Gastrocnemius medialis (tissue), 4 donors: ENCODE measurements at regions of chr1 and their contacts with region 1.

Region 1: GRCh38 chr1:37317870-37318467 is 156.4 kb upstream of the ZC3H12A start:
- DNase-seq: no peak
- ATAC-seq: no peak
- H3K4me3 ChIP-seq: no peak overlapping the region
- H3K27ac ChIP-seq: no peak overlapping the region
- H3K4me1 ChIP-seq: no peaks in the 10 kb centered on the region
- H3K27me3 ChIP-seq: peaks cover 36 to 51% (median 42%) of the 10 kb centered on the region in 3 donors
- CTCF ChIP-seq: no peak
- POLR2A ChIP-seq: no peak

Region 2: DNA sequence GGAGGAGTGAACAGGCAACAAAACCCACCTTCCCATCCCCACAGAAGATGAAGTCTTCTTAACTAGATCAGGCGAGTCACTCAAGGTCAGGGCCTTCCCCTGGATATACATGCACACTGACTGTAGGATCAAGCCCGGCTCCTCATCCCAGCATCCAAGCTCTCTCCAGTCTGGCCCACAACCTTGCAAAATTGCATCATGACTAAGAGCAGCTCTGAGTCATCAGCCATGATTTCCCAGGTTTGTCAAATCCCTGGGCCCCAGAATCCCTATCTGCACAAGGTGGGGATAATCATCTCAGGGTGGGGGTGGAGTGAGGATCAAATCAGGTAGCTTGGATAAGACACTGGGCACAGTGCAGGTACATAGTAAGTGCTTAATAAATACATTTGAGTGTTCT is 84.4 kb before region 1 on chr1:
- in situ Hi-C with region 1: no loop called
- intact Hi-C with region 1: no loop called
- DNase-seq: no peak
- ATAC-seq: no peak
- H3K4me3 ChIP-seq: no peak overlapping the region
- H3K27ac ChIP-seq: no peak overlapping the region
- H3K4me1 ChIP-seq: no peaks in the 10 kb centered on the region
- H3K27me3 ChIP-seq: peaks cover 0 to 6% (median 2%) of the 10 kb centered on the region in 3 donors
- CTCF ChIP-seq: no peak
- POLR2A ChIP-seq: no peak

Region 3: GRCh38 chr1:37338658-37339057 is 20.7 kb after region 1 on chr1:
- in situ Hi-C with region 1: no loop called
- intact Hi-C with region 1: loop called (anchors 2 kb)
- DNase-seq: no peak
- ATAC-seq: no peak
- H3K4me3 ChIP-seq: no peak overlapping the region
- H3K27ac ChIP-seq: no peak overlapping the region
- H3K4me1 ChIP-seq: no peaks in the 10 kb centered on the region
- H3K27me3 ChIP-seq: peaks cover 0 to 3% (median 0%) of the 10 kb centered on the region in 3 donors
- CTCF ChIP-seq: no peak
- POLR2A ChIP-seq: no peak